GM12878 (cell line): ENCODE measurements at regions of chr19 and their contacts with region 1.

Region 1: GRCh38 chr19:56601375-56601774 is 6.3 kb downstream of the ZNF71 start:
- DNase-seq: no peak
- ATAC-seq: no peak
- H3K4me3 ChIP-seq: no peak overlapping the region
- H3K27ac ChIP-seq: no peak overlapping the region
- H3K4me1 ChIP-seq: no peaks in the 10 kb centered on the region
- H3K27me3 ChIP-seq: no peaks in the 10 kb centered on the region
- CTCF ChIP-seq: no peak
- EP300 ChIP-seq: no peak
- POLR2A ChIP-seq: no peak
- RAD21 ChIP-seq: no peak

Region 2: DNA sequence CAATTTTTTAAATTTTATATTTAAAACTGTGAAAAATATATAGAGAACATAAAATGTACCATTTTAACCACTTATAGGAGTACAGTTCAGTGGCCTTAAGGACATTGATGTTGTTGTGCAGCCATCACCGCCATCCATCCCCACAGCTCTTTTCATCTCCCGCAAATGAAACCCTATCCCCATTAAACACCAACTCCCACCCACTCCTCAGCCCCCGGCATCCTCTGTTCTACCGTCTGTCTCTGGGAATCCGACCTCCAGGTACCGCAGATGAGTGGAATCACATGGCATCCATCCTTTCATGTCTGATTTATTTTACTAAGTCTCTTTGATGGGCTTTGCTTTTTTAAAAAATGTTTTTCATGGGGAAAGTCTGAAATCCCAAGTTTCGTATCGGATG is 17.7 kb after region 1 on chr19:
- CTCF ChIA-PET with region 1: no interaction called
- POLR2A ChIA-PET with region 1: interaction called, 10 read pairs
- RAD21 ChIA-PET with region 1: no interaction called
- SMC1A ChIA-PET with region 1: no interaction called
- in situ Hi-C with region 1: no loop called
- intact Hi-C with region 1: no loop called
- DNase-seq: no peak
- ATAC-seq: no peak
- H3K4me3 ChIP-seq: no peak overlapping the region
- H3K27ac ChIP-seq: no peak overlapping the region
- H3K4me1 ChIP-seq: no peaks in the 10 kb centered on the region
- H3K27me3 ChIP-seq: no peaks in the 10 kb centered on the region
- CTCF ChIP-seq: no peak
- EP300 ChIP-seq: no peak
- POLR2A ChIP-seq: no peak
- RAD21 ChIP-seq: no peak

Region 3: GRCh38 chr19:56660381-56661107 is 59.2 kb after region 1 on chr19:
- CTCF ChIA-PET with region 1: no interaction called
- POLR2A ChIA-PET with region 1: no interaction called
- RAD21 ChIA-PET with region 1: no interaction called
- SMC1A ChIA-PET with region 1: no interaction called
- in situ Hi-C with region 1: no loop called
- intact Hi-C with region 1: no loop called
- DNase-seq: no peak
- ATAC-seq: no peak
- H3K4me3 ChIP-seq: no peak overlapping the region
- H3K27ac ChIP-seq: no peak overlapping the region
- H3K4me1 ChIP-seq: no peaks in the 10 kb centered on the region
- H3K27me3 ChIP-seq: no peaks in the 10 kb centered on the region
- CTCF ChIP-seq: no peak
- EP300 ChIP-seq: no peak
- POLR2A ChIP-seq: no peak
- RAD21 ChIP-seq: no peak